ENCODE measurements at regions of chr2 and their contacts with region 1.

Region 1: GRCh38 chr2:172555522-172556283 is at the start of gene PDK1:
- DNase-seq: peak; percentile 94
- ATAC-seq: peak; percentile 95
- H3K4me3 Mint-ChIP-seq: peak within 1 kb of the TSS; percentile 90
- H3K27ac Mint-ChIP-seq: peak within 1 kb of the TSS; percentile 90
- H3K4me1 Mint-ChIP-seq: peaks cover 58% of the 10 kb centered on the region
- H3K27me3 Mint-ChIP-seq: peaks cover 5% of the 10 kb centered on the region
- total RNA-seq, gene PDK1: 46.1 to 47.2 TPM

Region 2: GRCh38 chr2:172496160-172496608 is 59.5 kb before region 1 on chr2:
- CTCF ChIA-PET with region 1: interaction called, 5 read pairs
- POLR2A ChIA-PET with region 1: interaction called, 13 read pairs
- DNase-seq: peak; percentile 35
- ATAC-seq: peak; percentile 82
- H3K4me3 Mint-ChIP-seq: peak overlapping the region; percentile 47
- H3K27ac Mint-ChIP-seq: peak overlapping the region; percentile 95
- H3K4me1 Mint-ChIP-seq: peaks cover 29% of the 10 kb centered on the region
- H3K27me3 Mint-ChIP-seq: no peaks in the 10 kb centered on the region

Region 3: DNA sequence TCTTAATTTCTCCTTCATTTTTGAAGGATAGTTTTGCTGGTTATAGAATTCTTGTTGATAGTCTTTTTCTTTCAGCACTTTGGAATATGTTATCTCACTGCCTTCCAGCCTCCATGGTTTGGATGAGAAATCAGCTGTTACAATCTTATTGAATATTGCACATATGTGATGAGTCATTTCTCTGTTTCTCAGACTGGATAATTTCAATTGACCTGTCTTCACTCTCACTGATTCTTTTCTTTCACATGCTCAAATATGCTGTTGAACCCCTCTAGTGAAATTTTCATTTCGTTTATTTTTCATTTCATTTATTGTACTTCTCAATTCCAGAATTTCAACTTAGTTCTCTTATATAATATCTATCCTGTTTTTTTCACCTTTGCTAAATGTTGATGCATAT is 22.4 kb after region 1 on chr2:
- CTCF ChIA-PET with region 1: no interaction called
- POLR2A ChIA-PET with region 1: no interaction called
- DNase-seq: no peak
- ATAC-seq: no peak
- H3K4me3 Mint-ChIP-seq: no peak overlapping the region
- H3K27ac Mint-ChIP-seq: no peak overlapping the region
- H3K4me1 Mint-ChIP-seq: peaks cover 12% of the 10 kb centered on the region
- H3K27me3 Mint-ChIP-seq: no peaks in the 10 kb centered on the region